HepG2 (cell line): ENCODE measurements at regions of chr10 and their contacts with region 1.

Region 1: GRCh38 chr10:121043124-121043849 is 192.1 kb downstream of the WDR11 start:
- DNase-seq: peak; percentile 98
- ATAC-seq: peak; percentile 98
- H3K4me3 ChIP-seq: peak overlapping the region; percentile 11 to 59 (median 45); a peak in 5 of 6 replicates
- H3K27ac ChIP-seq: peak overlapping the region; percentile 90
- H3K4me1 ChIP-seq: peaks cover 38% of the 10 kb centered on the region
- H3K27me3 ChIP-seq: no peaks in the 10 kb centered on the region
- CTCF ChIP-seq: no peak
- EP300 ChIP-seq: peak; percentile 76 to 89; a peak in 3 of 4 replicates
- POLR2A ChIP-seq: peak in 1 of 2 experiments; percentile 65; a peak in 2 of 4 replicates
- RAD21 ChIP-seq: no peak; the same call in 1 of the 2 replicates

Region 2: GRCh38 chr10:121063744-121064143 is 20.5 kb after region 1 on chr10:
- CTCF ChIA-PET with region 1: no interaction called
- POLR2A ChIA-PET with region 1: interaction called, 12 read pairs
- in situ Hi-C with region 1: no loop called
- intact Hi-C with region 1: loop called (anchors 1 kb)
- DNase-seq: peak; percentile 88
- ATAC-seq: peak; percentile 100
- H3K4me3 ChIP-seq: no peak overlapping the region; a peak in 1 of 6 replicates
- H3K27ac ChIP-seq: no peak overlapping the region
- H3K4me1 ChIP-seq: peaks cover 35% of the 10 kb centered on the region
- H3K27me3 ChIP-seq: no peaks in the 10 kb centered on the region
- CTCF ChIP-seq: no peak
- EP300 ChIP-seq: peak in 1 of 2 experiments; percentile 72; a peak in 1 of 4 replicates
- POLR2A ChIP-seq: no peak
- RAD21 ChIP-seq: no peak